H1 (cell line): ENCODE measurements at regions of chr14 and their contacts with region 1.

Region 1: GRCh38 chr14:80213599-80213998 is 2.3 kb upstream of the DIO2 start:
- DNase-seq: peak; percentile 25 to 53
- H3K4me3 ChIP-seq: no peak overlapping the region
- H3K27ac ChIP-seq: no peak overlapping the region
- H3K4me1 ChIP-seq: no peaks in the 10 kb centered on the region; a peak in 1 of 7 replicates
- H3K27me3 ChIP-seq: no peaks in the 10 kb centered on the region
- CTCF ChIP-seq: peak; percentile 44 to 90 (median 63)
- EP300 ChIP-seq: no peak
- POLR2A ChIP-seq: no peak
- RAD21 ChIP-seq: peak; percentile 91 to 92

Region 2: GRCh38 chr14:80364274-80364673 is 150.7 kb after region 1 on chr14:
- CTCF ChIA-PET with region 1: interaction called, 18 read pairs
- POLR2A ChIA-PET with region 1: no interaction called
- DNase-seq: no peak
- H3K4me3 ChIP-seq: no peak overlapping the region
- H3K27ac ChIP-seq: no peak overlapping the region
- H3K4me1 ChIP-seq: no peaks in the 10 kb centered on the region
- H3K27me3 ChIP-seq: no peaks in the 10 kb centered on the region
- CTCF ChIP-seq: peak in 2 of 3 experiments; percentile 41 to 54; a peak in 2 of 4 replicates
- EP300 ChIP-seq: no peak
- POLR2A ChIP-seq: no peak
- RAD21 ChIP-seq: peak; percentile 66 to 74

Region 3: DNA sequence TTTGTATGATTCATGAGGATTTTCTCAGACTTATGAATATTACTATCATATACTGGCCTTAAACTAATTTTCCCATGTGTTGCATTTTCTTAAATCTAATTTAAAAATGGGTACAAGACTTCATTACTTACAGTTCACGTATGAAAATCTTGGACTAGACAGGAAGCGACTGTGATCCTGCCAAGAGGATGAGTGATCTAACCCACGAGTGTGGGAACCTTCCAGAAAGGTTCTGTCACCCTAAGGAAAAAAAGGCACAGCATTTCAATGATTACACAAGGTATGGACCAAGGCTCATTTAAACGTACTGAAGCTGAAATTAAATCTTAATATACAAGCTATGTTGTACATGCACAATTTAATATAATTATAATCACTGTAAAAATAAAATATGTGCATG is 291.2 kb after region 1 on chr14:
- CTCF ChIA-PET with region 1: no interaction called
- POLR2A ChIA-PET with region 1: no interaction called
- DNase-seq: no peak
- H3K4me3 ChIP-seq: no peak overlapping the region
- H3K27ac ChIP-seq: no peak overlapping the region
- H3K4me1 ChIP-seq: no peaks in the 10 kb centered on the region
- H3K27me3 ChIP-seq: no peaks in the 10 kb centered on the region
- CTCF ChIP-seq: no peak
- EP300 ChIP-seq: no peak
- POLR2A ChIP-seq: no peak
- RAD21 ChIP-seq: no peak

Region 4: DNA sequence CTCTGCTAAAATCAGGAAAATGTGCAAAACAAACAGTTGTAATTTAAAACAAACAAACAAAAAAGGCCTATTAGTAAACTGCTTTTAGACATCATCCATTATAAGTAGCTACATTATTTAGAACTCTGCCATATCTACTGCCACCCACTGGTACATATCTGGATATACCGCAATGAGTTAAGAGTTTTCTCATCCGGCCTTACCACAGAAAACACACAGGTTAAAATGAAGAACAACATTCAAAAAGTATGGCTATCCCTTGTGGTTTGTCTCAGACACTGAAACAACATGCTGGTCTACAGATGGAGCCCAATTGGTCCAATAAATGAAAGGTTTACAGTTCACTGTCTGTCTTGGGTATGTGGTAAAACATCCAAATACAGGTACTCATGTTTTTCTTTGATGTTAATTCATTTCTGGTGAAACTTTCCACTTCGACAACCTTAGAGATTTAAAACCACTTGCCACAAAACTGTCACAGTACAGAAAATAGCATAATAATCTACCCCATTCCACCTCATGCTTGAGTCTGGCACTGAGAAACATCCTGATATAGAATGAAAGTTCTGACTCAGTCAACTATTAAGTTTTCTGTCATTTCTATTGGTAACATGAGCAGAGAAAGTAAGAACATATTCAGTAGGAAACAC is 373.6 kb after region 1 on chr14:
- CTCF ChIA-PET with region 1: interaction called, 13 read pairs
- POLR2A ChIA-PET with region 1: no interaction called
- DNase-seq: no peak
- H3K4me3 ChIP-seq: no peak overlapping the region
- H3K27ac ChIP-seq: no peak overlapping the region
- H3K4me1 ChIP-seq: no peaks in the 10 kb centered on the region; a peak in 1 of 7 replicates
- H3K27me3 ChIP-seq: no peaks in the 10 kb centered on the region
- CTCF ChIP-seq: peak in 2 of 3 experiments; percentile 17 to 51; a peak in 2 of 4 replicates
- EP300 ChIP-seq: no peak
- POLR2A ChIP-seq: no peak
- RAD21 ChIP-seq: peak; percentile 47 to 48

Region 5: DNA sequence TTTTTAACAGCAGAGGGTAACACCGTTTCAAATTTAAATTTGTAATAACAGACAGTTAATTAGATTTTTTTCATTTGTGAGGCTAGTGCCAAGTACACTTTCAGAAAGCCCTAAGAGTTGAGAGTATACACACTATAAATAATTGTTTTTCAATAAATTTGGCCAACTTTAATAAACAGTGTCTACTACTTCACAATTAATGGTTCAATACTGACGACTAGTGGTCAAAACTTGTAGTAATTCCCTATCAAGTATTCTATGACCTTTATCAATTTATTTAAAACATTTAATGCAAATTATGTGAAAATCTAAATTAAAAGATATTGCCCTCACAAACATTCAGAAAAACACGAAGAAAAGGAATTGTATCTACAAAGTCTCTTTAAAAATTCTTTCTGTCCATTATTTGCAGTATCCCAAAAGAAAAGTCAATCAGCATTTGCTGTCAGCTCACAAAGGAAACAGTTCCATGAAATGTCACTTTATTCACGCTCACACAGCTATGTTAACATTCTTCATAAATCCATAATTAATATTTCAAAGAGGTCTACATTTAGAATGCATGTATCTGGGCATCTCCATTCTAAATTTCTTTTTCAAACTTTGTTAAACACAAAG is 636.7 kb after region 1 on chr14:
- CTCF ChIA-PET with region 1: interaction called, 20 read pairs
- POLR2A ChIA-PET with region 1: no interaction called
- DNase-seq: no peak
- H3K4me3 ChIP-seq: no peak overlapping the region
- H3K27ac ChIP-seq: no peak overlapping the region
- H3K4me1 ChIP-seq: no peaks in the 10 kb centered on the region
- H3K27me3 ChIP-seq: no peaks in the 10 kb centered on the region
- CTCF ChIP-seq: peak in 1 of 3 experiments; percentile 11; a peak in 1 of 4 replicates
- EP300 ChIP-seq: no peak
- POLR2A ChIP-seq: no peak
- RAD21 ChIP-seq: peak; percentile 56 to 62